Caco-2 (cell line): ENCODE measurements at regions of chr9 and their contacts with region 1.

Region 1: DNA sequence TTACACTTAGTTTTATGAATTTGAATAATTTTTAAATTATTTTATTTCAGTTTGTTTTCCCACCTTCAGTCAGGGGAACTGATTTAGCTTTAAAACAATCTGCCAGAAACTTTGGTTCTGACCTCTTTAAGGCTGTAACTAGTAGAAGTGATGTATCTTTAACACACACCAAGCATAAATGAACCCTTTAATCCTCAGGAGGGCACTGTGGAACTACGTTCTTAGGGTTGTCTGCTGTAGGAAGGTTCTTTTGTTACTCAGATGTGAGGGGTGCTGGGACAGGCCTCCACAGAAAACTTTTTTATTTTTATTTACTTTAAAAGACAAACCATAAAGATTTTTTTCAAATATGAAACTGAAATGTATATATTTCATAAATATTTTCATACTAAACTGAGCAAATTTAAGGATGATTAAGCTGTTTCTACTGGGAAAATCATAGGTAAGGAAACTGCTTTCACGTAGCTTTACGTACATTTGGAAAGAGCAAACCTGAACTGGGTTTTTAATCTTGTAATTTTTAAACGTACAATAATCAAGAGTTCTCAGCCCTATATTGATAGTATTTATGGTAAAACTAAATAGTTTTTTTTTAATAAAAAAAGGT is 5.3 kb downstream of the KLF4 start:
- DNase-seq: peak; percentile 52 to 65
- H3K4me3 ChIP-seq: no peak overlapping the region
- H3K4me3 Mint-ChIP-seq: no peak overlapping the region
- H3K27ac Mint-ChIP-seq: no peak overlapping the region
- H3K4me1 ChIP-seq: no peaks in the 10 kb centered on the region
- H3K4me1 Mint-ChIP-seq: no peaks in the 10 kb centered on the region
- H3K27me3 ChIP-seq: no peaks in the 10 kb centered on the region
- H3K27me3 Mint-ChIP-seq: no peaks in the 10 kb centered on the region
- CTCF ChIP-seq: peak; percentile 55 to 61

Region 2: GRCh38 chr9:107421947-107422793 is 62.0 kb before region 1 on chr9:
- CTCF ChIA-PET with region 1: interaction called, 3 read pairs
- POLR2A ChIA-PET with region 1: no interaction called
- intact Hi-C with region 1: loop called (anchors 1 kb)
- DNase-seq: peak; percentile 84 to 87
- H3K4me3 ChIP-seq: no peak overlapping the region
- H3K4me3 Mint-ChIP-seq: no peak overlapping the region
- H3K27ac Mint-ChIP-seq: no peak overlapping the region
- H3K4me1 ChIP-seq: no peaks in the 10 kb centered on the region
- H3K4me1 Mint-ChIP-seq: no peaks in the 10 kb centered on the region
- H3K27me3 ChIP-seq: no peaks in the 10 kb centered on the region
- H3K27me3 Mint-ChIP-seq: no peaks in the 10 kb centered on the region
- CTCF ChIP-seq: peak; percentile 80 to 87

Region 3: GRCh38 chr9:107784231-107784958 is 300.2 kb after region 1 on chr9:
- CTCF ChIA-PET with region 1: no interaction called
- POLR2A ChIA-PET with region 1: no interaction called
- intact Hi-C with region 1: no loop called
- DNase-seq: peak; percentile 31 to 64
- H3K4me3 ChIP-seq: no peak overlapping the region
- H3K4me3 Mint-ChIP-seq: peak overlapping the region; percentile 19
- H3K27ac Mint-ChIP-seq: peak overlapping the region; percentile 69
- H3K4me1 ChIP-seq: peaks cover 10% of the 10 kb centered on the region
- H3K4me1 Mint-ChIP-seq: peaks cover 15% of the 10 kb centered on the region
- H3K27me3 ChIP-seq: no peaks in the 10 kb centered on the region
- H3K27me3 Mint-ChIP-seq: no peaks in the 10 kb centered on the region
- CTCF ChIP-seq: no peak

Region 4: GRCh38 chr9:107976765-107977164 is 492.5 kb after region 1 on chr9:
- CTCF ChIA-PET with region 1: no interaction called
- POLR2A ChIA-PET with region 1: no interaction called
- intact Hi-C with region 1: no loop called
- DNase-seq: no peak
- H3K4me3 ChIP-seq: no peak overlapping the region
- H3K4me3 Mint-ChIP-seq: no peak overlapping the region
- H3K27ac Mint-ChIP-seq: no peak overlapping the region
- H3K4me1 ChIP-seq: no peaks in the 10 kb centered on the region; the same call in 1 of the 2 replicates
- H3K4me1 Mint-ChIP-seq: no peaks in the 10 kb centered on the region
- H3K27me3 ChIP-seq: no peaks in the 10 kb centered on the region
- H3K27me3 Mint-ChIP-seq: peaks cover 4% of the 10 kb centered on the region
- CTCF ChIP-seq: no peak